ENCODE measurements at regions of chr17 and their contacts with region 1.

Region 1: GRCh38 chr17:19397556-19398041 is 10.6 kb upstream of the MFAP4 start:
- DNase-seq: no peak
- ATAC-seq: peak in 2 of 8 donors; percentile 19 to 34
- H3K4me3 ChIP-seq: no peak overlapping the region
- H3K27ac ChIP-seq: peak overlapping the region in 5 of 10 donors; percentile 23 to 67 (median 48)
- H3K4me1 ChIP-seq: peaks cover 0 to 26% (median 17%) of the 10 kb centered on the region in 9 donors
- H3K27me3 ChIP-seq: no peaks in the 10 kb centered on the region
- CTCF ChIP-seq: no peak

Region 2: DNA sequence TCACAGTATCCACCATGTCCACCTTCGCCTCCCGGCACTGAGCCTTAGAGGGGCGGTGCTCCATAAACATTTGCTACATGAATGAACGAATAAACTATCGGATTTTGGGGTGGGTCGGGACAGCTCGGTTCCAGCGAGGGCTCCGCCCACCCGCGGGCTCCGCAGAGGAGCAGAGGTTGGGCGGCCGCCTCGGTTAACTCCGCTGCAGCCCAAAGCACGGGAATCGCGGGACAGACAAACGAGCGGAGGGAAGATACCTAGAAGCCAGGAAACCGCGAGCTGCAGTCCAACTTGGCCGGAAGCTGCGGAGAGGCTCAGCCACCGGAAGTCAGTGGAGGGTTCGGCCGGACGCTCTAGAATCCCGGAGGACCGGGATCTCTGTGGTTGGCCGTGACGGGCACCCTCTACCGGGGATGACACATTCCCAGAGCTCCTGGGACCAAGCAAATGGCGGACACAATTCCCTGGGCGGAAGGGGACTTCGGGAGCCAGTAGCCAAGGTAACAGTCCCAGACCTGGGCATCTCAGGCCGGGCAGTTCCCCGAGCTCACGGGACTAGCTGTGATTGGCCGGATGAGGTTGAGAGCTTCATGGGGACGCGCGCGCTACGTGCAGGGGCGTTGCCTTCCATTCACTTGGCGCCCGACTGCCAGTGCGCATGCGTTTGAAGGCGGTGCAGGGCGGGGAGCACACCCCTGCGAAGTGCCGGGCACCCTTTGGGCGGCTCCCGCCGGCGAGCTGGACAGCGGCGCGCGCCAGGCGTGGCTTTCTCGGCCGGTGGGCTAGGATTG is 19.8 kb before region 1 on chr17:
- intact Hi-C with region 1: loop called in 1 of 10 experiments (anchors 2 kb)
- DNase-seq: peak; percentile 98 to 99
- ATAC-seq: peak; percentile 95 to 98 (median 96)
- H3K4me3 ChIP-seq: peak overlapping the region; percentile 47 to 96 (median 88)
- H3K27ac ChIP-seq: peak overlapping the region; percentile 80 to 98 (median 94)
- H3K4me1 ChIP-seq: peaks cover 3 to 33% (median 22%) of the 10 kb centered on the region in 9 donors
- H3K27me3 ChIP-seq: no peaks in the 10 kb centered on the region
- CTCF ChIP-seq: peak in 5 of 9 donors; percentile 15 to 31 (median 17)

Region 3: GRCh38 chr17:19433727-19434340 is 36.2 kb after region 1 on chr17:
- intact Hi-C with region 1: loop called in 1 of 10 experiments (anchors 5 kb)
- DNase-seq: no peak
- ATAC-seq: no peak
- H3K4me3 ChIP-seq: no peak overlapping the region
- H3K27ac ChIP-seq: no peak overlapping the region
- H3K4me1 ChIP-seq: no peaks in the 10 kb centered on the region
- H3K27me3 ChIP-seq: no peaks in the 10 kb centered on the region
- CTCF ChIP-seq: no peak